Tibial artery (tissue), 4 donors: ENCODE measurements at regions of chr10 and their contacts with region 1.

Region 1: DNA sequence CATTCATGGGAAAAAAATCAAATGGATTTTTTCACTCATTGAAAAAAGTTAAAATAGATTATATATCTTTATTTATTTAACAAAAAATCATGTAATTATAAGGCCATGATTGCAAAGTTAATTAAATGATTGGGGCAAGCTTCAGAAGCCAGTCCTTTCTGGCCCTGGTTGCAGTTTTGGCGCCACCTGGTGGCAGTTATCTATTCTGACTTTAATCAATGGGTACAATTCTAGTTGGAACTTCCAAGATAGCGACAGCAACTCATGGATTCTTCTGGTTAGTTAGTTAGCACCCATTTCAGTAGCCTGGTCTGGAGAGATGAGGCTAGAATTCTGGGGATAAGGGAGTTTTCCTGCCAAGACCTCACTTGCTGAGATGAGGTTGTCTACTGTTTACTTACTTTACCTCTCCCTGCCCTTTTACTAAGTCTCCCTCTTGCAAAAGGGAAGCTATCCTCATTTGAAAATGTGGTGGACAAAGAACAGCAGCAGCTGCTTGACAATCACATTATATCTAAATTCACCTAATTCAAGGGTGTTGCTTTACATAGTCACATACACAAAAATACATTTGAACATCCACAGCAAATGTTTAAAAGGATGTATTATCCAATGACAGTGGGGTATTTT is 42.3 kb downstream of the NOC3L start:
- DNase-seq: peak in 1 of 2 donors; percentile 70
- H3K4me3 ChIP-seq: no peak overlapping the region
- H3K27ac ChIP-seq: no peak overlapping the region
- H3K4me1 ChIP-seq: peaks cover 0 to 21% (median 4%) of the 10 kb centered on the region in 4 donors
- H3K27me3 ChIP-seq: no peaks in the 10 kb centered on the region
- CTCF ChIP-seq: peak; percentile 73 to 86

Region 2: DNA sequence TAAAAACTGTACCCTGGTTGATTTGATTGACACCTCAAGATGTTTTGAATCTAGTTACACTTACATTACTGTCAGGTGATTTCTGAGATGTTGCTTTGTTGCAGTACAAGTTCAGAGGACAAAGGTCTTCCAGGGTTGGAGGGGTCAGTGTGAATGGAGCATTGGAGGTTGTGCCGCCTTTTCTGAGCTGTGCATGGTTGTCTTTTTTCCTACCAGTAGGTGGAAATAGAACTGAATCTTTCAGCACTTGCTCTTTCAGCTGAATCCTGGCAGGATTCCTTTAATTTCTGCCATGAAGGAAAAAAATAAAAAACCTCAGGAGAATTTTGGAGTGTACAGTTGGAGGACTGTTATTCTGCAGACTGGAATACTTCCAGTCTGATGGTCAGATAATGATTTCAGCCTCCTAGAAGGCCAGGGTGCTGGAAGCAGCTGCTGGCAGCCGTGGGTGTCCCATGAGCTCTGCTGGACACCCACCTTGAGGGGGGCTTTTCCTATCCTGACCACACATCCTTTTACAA is 244.0 kb before region 1 on chr10:
- intact Hi-C with region 1: loop called (anchors 2 kb)
- DNase-seq: no peak
- H3K4me3 ChIP-seq: peak overlapping the region in 1 of 2 donors; percentile 18
- H3K27ac ChIP-seq: no peak overlapping the region
- H3K4me1 ChIP-seq: peaks cover 0 to 19% (median 9%) of the 10 kb centered on the region in 4 donors
- H3K27me3 ChIP-seq: no peaks in the 10 kb centered on the region
- CTCF ChIP-seq: peak; percentile 64 to 83

Region 3: DNA sequence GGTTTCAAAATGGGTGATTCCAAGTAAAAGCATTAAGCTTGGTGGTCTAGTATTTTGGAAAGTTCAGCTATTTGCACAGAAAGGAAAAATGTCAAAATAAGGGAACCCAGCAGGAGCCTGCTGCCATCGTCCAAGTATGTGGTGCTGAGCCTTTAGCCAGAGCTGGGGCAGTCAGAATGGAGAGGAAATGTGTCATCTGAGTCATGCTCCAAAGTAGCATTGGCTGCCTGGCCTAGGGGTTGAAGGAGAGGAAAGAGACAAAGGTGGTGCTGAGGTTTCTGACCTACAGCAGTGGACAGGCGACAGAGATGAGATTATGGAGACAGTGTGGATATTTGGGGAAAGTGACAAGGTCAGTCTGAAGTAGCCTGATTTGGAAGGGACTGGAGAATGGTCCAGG is 222.7 kb before region 1 on chr10:
- intact Hi-C with region 1: no loop called
- DNase-seq: no peak
- H3K4me3 ChIP-seq: no peak overlapping the region
- H3K27ac ChIP-seq: peak overlapping the region in 1 of 2 donors; percentile 79
- H3K4me1 ChIP-seq: peaks cover 0 to 96% (median 32%) of the 10 kb centered on the region in 4 donors
- H3K27me3 ChIP-seq: no peaks in the 10 kb centered on the region
- CTCF ChIP-seq: no peak

Region 4: DNA sequence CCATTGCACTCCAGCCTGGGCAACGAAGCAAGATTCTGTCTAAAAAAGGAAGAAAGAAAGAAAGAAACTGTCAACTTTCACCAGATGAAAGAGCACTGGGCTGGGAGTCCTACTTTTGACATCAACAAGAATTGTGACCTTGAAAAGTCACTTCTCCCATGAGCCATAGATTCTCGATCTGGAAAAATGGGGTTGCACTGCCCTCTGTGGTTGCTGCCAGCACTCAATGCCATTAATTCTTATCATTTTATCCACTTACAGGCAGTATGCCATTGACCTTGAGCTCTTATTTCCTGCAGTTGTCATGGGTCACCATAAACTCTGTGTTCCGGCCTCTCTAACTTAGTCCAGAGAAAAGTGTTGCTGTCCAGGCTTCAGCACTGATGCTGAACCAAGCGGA is 94.8 kb before region 1 on chr10:
- intact Hi-C with region 1: no loop called
- DNase-seq: no peak
- H3K4me3 ChIP-seq: no peak overlapping the region
- H3K27ac ChIP-seq: peak overlapping the region; percentile 19 to 53
- H3K4me1 ChIP-seq: peaks cover 0 to 41% (median 7%) of the 10 kb centered on the region in 4 donors
- H3K27me3 ChIP-seq: no peaks in the 10 kb centered on the region
- CTCF ChIP-seq: peak; percentile 24 to 29